AG04449 (cell line): ENCODE measurements at regions of chr3 and their contacts with region 1.

Region 1: GRCh38 chr3:113287803-113288648 is 76.7 kb downstream of the BOC start:
- DNase-seq: no peak
- H3K4me3 ChIP-seq: no peak overlapping the region
- CTCF ChIP-seq: peak; percentile 88

Region 2: GRCh38 chr3:112979240-112979832 is 308.7 kb before region 1 on chr3:
- CTCF ChIA-PET with region 1: no interaction called
- POLR2A ChIA-PET with region 1: no interaction called
- DNase-seq: peak; percentile 5
- H3K4me3 ChIP-seq: no peak overlapping the region
- CTCF ChIP-seq: peak; percentile 30

Region 3: DNA sequence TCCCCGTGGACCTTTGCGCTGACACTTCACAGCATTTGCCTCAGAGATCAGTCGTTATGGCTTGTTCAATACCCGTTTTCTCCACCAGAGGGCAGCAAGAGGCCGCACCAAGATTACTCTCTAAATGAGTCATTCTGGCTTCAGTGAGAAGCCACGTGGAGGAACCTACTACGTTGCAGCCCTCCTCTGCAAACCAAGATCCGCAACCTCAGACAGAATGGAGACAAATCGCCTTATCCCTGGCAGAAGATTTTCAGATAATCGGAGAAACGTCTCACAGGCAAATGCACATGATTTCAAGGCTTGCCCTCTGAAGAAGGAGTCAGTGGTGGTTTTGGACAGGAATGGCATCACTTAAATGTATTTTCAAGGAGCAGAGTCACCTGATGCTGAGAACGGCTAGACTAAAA is 236.7 kb before region 1 on chr3:
- CTCF ChIA-PET with region 1: interaction called, 144 read pairs
- POLR2A ChIA-PET with region 1: no interaction called
- DNase-seq: no peak
- H3K4me3 ChIP-seq: no peak overlapping the region
- CTCF ChIP-seq: peak; percentile 63

Region 4: GRCh38 chr3:113136071-113136470 is 152.0 kb before region 1 on chr3:
- CTCF ChIA-PET with region 1: interaction called, 121 read pairs
- POLR2A ChIA-PET with region 1: no interaction called
- DNase-seq: no peak
- H3K4me3 ChIP-seq: no peak overlapping the region
- CTCF ChIP-seq: peak; percentile 30

Region 5: DNA sequence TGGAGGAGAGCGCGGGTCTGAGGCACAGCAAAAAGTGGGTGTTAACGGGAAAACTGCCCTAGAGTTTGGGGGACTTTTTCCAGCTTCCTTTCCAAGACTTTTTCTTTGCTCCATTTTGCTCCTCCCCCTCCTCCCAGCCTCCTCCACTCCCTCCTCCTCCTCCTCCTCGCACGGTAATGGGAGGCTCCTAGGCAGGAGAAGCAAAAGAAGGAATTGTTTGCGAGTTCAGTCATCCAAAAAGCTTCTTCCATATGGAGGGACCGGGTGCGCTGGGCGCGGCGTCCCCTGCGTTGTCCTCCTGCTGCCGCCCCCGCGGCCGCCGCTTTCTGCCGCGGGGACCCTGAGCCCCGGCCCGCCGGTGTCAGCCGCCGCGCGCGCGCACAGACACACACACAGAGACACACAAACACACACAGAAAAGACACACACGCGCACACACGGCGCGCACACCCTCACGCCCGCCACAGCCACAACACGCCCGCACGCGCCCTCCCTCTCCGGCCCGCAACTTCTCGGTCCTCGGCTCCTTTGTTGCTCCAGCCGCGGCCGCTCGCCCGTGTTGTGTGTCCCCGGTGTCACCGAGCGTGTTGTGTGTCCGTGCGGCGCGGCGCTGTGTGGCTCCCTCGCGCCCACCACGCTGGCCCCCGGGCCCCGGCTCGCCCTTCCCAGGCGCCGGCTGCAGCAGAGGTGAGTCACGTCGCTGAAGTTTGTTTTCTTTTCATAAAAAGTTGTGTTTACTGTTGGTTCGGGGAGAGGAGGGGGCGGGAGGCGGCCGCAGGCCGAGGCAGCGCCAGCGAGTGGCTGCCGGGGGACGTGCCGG is 76.5 kb before region 1 on chr3 and contains the start of gene BOC:
- CTCF ChIA-PET with region 1: interaction called, 17 read pairs
- POLR2A ChIA-PET with region 1: no interaction called
- DNase-seq: no peak
- H3K4me3 ChIP-seq: peak within 1 kb of the TSS; percentile 89
- CTCF ChIP-seq: no peak

Region 6: DNA sequence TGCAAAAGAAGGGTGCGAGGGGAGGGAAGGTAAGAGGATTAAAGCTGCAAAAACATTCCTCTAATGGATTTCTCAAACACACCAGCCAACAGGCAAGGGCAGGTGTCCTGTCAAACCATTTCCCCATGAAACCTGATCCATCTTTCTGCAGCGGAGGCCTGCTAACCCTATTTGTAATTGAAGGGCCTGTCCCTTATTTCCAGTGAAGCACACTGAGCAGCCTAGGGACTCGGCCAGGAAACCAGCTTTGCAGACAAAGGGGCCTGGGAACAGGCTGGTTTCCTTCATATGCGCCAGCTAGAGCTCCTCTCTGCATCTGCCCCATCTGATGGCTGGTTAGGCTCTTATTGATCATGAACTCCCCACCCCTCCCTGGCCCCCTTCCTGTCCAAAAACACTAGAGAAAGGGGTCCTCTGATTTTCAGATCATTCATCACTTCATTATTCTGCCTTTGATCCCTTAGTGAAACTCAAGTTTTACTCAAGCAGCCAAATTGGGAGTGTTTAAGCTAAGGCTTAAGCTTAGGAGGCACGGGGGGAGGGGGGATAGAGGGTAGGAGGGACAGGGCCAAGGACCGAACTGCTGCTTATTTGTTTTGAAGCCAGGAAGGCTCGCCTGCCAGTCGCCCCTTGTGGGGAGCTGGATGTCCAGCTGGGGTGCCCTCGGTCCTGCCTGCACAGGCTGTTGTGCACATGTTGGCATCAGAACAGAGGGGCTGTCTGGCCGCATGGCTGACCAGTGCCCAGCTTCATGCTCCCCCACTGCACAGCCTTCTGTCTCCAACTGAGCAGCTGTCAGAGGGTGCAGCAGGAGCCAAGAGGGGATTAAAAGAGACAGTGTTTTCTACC is 23.5 kb before region 1 on chr3:
- CTCF ChIA-PET with region 1: interaction called, 15 read pairs
- POLR2A ChIA-PET with region 1: no interaction called
- DNase-seq: no peak
- H3K4me3 ChIP-seq: no peak overlapping the region
- CTCF ChIP-seq: no peak

Region 7: DNA sequence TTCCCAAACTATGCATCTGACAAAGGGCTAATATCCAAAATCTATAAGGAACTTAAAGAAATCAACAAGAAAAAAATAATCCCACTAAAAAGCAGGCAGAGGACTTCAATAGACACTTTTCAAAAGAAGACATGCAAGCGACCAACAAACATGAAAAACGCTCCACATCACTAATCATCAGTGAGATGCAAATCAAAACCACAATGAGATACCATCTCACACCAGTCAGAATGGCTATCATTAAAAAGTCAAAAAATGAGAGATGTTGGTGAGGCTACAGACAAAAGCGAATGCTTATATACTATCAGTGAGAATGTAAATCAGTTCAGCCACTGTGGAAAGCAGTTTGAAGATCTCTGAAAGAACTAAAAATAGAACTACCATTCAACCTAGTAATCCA is 133.1 kb after region 1 on chr3:
- CTCF ChIA-PET with region 1: no interaction called
- POLR2A ChIA-PET with region 1: no interaction called
- DNase-seq: no peak
- H3K4me3 ChIP-seq: no peak overlapping the region
- CTCF ChIP-seq: no peak